Sigmoid colon (tissue), 7 donors: ENCODE measurements at regions of chr17 and their contacts with region 1.

Region 1: DNA sequence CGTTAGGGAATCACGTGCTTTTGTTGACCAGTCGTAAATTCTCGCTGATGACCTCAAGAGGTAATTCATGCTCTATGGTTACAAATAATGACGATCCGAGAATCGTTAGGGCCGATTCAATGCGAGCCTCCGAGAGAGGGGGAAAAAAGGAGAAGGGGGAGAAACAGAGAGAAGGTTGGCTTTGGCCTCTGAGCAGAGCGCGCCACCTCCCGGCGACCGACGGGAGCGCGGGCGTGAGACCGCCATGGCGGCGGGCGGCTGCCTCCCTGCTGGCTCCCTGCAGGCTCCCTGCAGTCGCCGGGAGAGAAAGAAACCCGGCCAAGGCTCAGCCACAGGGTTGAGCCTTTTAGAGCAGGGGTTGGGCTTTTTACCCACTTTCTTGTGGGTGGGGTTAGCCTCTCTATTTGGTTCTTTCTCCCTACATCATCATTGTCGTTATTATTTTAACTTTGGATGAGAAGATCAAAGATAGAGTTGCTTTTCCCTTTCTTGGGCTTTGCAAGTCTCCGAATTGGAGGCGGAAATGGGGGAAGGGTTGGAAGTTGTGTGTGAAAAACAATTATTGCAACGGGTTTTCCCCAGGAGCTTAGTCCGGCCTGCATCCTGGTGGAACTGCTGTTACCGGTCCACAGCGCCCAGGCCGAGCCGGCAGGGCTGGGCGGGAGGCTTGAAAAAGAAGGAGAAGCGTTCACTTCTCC is 410 bp upstream of the HOXB5 start:
- DNase-seq: peak; percentile 92
- H3K4me3 ChIP-seq: peak overlapping the region; percentile 36 to 70 (median 56)
- H3K27ac ChIP-seq: peak overlapping the region in 3 of 4 donors; percentile 95 to 99 (median 97)
- H3K4me1 ChIP-seq: peaks cover 0 to 61% (median 52%) of the 10 kb centered on the region in 4 donors
- H3K27me3 ChIP-seq: peaks cover 0 to 7% (median 0%) of the 10 kb centered on the region in 3 donors
- CTCF ChIP-seq: peak; percentile 90 to 94 (median 92)
- EP300 ChIP-seq: no peak
- POLR2A ChIP-seq: no peak

Region 2: GRCh38 chr17:48335858-48336500 is 258.0 kb before region 1 on chr17:
- intact Hi-C with region 1: loop called (anchors 1 kb)
- DNase-seq: no peak
- H3K4me3 ChIP-seq: no peak overlapping the region
- H3K27ac ChIP-seq: no peak overlapping the region
- H3K4me1 ChIP-seq: no peaks in the 10 kb centered on the region
- H3K27me3 ChIP-seq: peaks cover 31 to 97% (median 75%) of the 10 kb centered on the region in 3 donors
- CTCF ChIP-seq: peak; percentile 30 to 75 (median 66)
- EP300 ChIP-seq: no peak
- POLR2A ChIP-seq: no peak

Region 3: DNA sequence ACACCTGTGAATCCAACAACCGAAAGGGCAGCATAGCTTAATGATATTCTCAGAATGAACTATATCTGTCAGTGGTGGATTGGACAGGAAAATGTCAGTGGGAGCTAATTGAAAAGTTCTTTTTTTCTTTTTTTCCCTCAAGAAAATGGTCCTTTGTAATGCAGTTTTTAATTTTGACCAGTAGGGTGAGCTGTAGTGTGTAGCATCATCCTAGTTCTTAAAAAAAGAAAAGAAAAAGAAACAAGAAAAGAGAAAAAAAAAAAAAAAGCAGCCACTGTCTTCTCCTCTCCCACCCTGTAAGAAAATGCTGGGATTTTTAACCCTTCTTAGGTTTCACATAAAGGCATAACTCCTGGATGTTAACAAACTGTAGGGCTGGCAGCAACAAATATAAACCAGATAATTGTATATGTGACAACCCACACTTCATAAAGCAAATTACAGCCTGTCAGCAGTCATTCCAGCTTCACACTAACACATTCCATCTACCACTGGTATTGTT is 242.1 kb before region 1 on chr17:
- intact Hi-C with region 1: loop called (anchors 1 kb)
- DNase-seq: no peak
- H3K4me3 ChIP-seq: no peak overlapping the region
- H3K27ac ChIP-seq: no peak overlapping the region
- H3K4me1 ChIP-seq: no peaks in the 10 kb centered on the region
- H3K27me3 ChIP-seq: peaks cover 0 to 5% (median 0%) of the 10 kb centered on the region in 3 donors
- CTCF ChIP-seq: peak; percentile 52 to 71 (median 68)
- EP300 ChIP-seq: no peak
- POLR2A ChIP-seq: no peak